ENCODE measurements at regions of chr16 and their contacts with region 1.

Region 1: GRCh38 chr16:23160574-23160973 is 11.3 kb upstream of the USP31 start:
- DNase-seq: no peak
- H3K4me3 ChIP-seq: no peak overlapping the region
- H3K4me3 Mint-ChIP-seq: no peak overlapping the region
- H3K27ac ChIP-seq: no peak overlapping the region
- H3K27ac Mint-ChIP-seq: no peak overlapping the region
- H3K4me1 ChIP-seq: no peaks in the 10 kb centered on the region
- H3K4me1 Mint-ChIP-seq: peaks cover 5% of the 10 kb centered on the region
- H3K27me3 ChIP-seq: peaks cover 4 to 5% of the 10 kb centered on the region in 2 donors
- H3K27me3 Mint-ChIP-seq: peaks cover 9 to 25% (median 20%) of the 10 kb centered on the region in 3 donors
- CTCF ChIP-seq: no peak

Region 2: GRCh38 chr16:22970209-22970865 is 190.2 kb before region 1 on chr16:
- intact Hi-C with region 1: no loop called
- DNase-seq: no peak
- H3K4me3 ChIP-seq: no peak overlapping the region
- H3K4me3 Mint-ChIP-seq: no peak overlapping the region
- H3K27ac ChIP-seq: no peak overlapping the region
- H3K27ac Mint-ChIP-seq: no peak overlapping the region
- H3K4me1 ChIP-seq: no peaks in the 10 kb centered on the region
- H3K4me1 Mint-ChIP-seq: peaks cover 2% of the 10 kb centered on the region
- H3K27me3 ChIP-seq: no peaks in the 10 kb centered on the region
- H3K27me3 Mint-ChIP-seq: peaks cover 5 to 15% (median 5%) of the 10 kb centered on the region in 3 donors
- CTCF ChIP-seq: no peak

Region 3: GRCh38 chr16:23114131-23114904 is 46.3 kb before region 1 on chr16:
- intact Hi-C with region 1: no loop called
- DNase-seq: no peak
- H3K4me3 ChIP-seq: no peak overlapping the region
- H3K4me3 Mint-ChIP-seq: no peak overlapping the region
- H3K27ac ChIP-seq: no peak overlapping the region
- H3K27ac Mint-ChIP-seq: no peak overlapping the region
- H3K4me1 ChIP-seq: no peaks in the 10 kb centered on the region
- H3K4me1 Mint-ChIP-seq: peaks cover 3% of the 10 kb centered on the region
- H3K27me3 ChIP-seq: no peaks in the 10 kb centered on the region
- H3K27me3 Mint-ChIP-seq: peaks cover 0 to 3% (median 2%) of the 10 kb centered on the region in 3 donors
- CTCF ChIP-seq: no peak

Region 4: DNA sequence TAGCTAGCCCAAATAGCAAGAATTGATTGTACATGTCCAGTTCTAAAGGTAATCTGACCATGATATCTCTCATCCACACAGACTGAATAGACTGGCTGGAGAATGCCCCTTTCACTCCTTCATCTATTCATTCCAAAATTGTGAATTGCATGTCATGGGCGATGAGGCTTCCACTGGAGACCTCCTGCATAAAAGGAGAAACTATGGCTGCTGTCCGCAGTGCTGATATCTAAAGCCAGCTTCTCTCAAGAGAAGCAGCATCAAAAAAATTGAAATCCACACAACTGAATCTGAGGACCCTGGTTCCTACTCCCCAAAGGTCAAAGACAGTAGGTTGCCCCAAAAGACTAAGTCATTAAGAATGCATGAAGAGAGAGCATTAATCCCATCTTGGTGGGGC is 14.0 kb after region 1 on chr16:
- intact Hi-C with region 1: no loop called
- DNase-seq: no peak
- H3K4me3 ChIP-seq: no peak overlapping the region
- H3K4me3 Mint-ChIP-seq: no peak overlapping the region
- H3K27ac ChIP-seq: no peak overlapping the region
- H3K27ac Mint-ChIP-seq: no peak overlapping the region
- H3K4me1 ChIP-seq: peaks cover 5 to 8% of the 10 kb centered on the region in 2 donors
- H3K4me1 Mint-ChIP-seq: peaks cover 8% of the 10 kb centered on the region
- H3K27me3 ChIP-seq: peaks cover 0 to 2% of the 10 kb centered on the region in 2 donors
- H3K27me3 Mint-ChIP-seq: peaks cover 8 to 32% (median 18%) of the 10 kb centered on the region in 3 donors
- CTCF ChIP-seq: no peak

Region 5: GRCh38 chr16:23185656-23186055 is 25.1 kb after region 1 on chr16:
- intact Hi-C with region 1: loop called in 1 of 2 experiments (anchors 2 kb)
- DNase-seq: no peak
- H3K4me3 ChIP-seq: no peak overlapping the region
- H3K4me3 Mint-ChIP-seq: no peak overlapping the region
- H3K27ac ChIP-seq: no peak overlapping the region
- H3K27ac Mint-ChIP-seq: no peak overlapping the region
- H3K4me1 ChIP-seq: peaks cover 5 to 12% of the 10 kb centered on the region in 2 donors
- H3K4me1 Mint-ChIP-seq: peaks cover 4% of the 10 kb centered on the region
- H3K27me3 ChIP-seq: peaks cover 30 to 51% of the 10 kb centered on the region in 2 donors
- H3K27me3 Mint-ChIP-seq: peaks cover 45 to 67% (median 56%) of the 10 kb centered on the region in 3 donors
- CTCF ChIP-seq: no peak

Measured in CD14-positive monocyte (primary cell).